GM13977 (cell line): ENCODE measurements at regions of chr6 and their contacts with region 1.

Region 1: DNA sequence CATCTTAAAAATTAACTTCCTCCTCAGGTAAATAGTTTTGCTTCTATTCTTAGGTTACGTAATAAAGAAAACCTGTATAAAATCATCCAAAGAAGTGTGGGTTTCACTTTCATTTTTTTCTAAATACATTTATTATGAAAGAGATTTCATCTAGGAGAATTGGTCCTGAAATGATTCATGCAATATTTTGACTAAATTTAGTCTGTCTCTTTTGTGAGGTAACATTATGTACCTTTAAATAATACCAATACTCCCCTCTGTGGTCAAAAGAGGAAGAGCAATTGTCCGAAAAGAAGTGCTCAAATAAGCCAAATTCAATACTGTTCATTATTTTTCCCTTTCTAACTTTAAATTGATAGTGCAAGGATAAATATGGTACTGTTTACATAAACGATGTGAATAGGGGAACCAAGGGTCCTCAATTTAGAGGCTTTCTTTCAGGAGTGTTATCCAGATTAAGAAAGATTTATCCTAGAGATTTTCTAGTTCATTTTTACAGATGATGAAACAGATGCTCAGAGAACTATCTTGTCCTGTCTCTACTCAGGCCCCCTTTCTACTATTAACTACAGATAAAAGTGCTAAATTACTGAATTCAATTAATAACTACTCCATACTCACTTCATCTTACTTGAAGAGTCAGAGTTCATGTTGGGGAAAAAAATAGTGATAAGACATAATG is 26.2 kb downstream of the CYP39A1 start:
- DNase-seq: peak; percentile 24
- CTCF ChIP-seq: peak; percentile 51

Region 2: GRCh38 chr6:46062306-46062706 is 564.1 kb before region 1 on chr6:
- in situ Hi-C with region 1: loop called (anchors 25 kb)
- DNase-seq: no peak
- CTCF ChIP-seq: no peak